Right ventricle myocardium superior (tissue), 1 donor: ENCODE measurements at regions of chr11 and their contacts with region 1.

Region 1: GRCh38 chr11:44538375-44539054 is 26.9 kb upstream of the CD82 start:
- DNase-seq: peak; percentile 86
- ATAC-seq: peak; percentile 97

Region 2: GRCh38 chr11:44094260-44094868 is 444.2 kb before region 1 on chr11:
- intact Hi-C with region 1: loop called (anchors 5 kb)
- DNase-seq: peak; percentile 57
- ATAC-seq: peak; percentile 68

Region 3: DNA sequence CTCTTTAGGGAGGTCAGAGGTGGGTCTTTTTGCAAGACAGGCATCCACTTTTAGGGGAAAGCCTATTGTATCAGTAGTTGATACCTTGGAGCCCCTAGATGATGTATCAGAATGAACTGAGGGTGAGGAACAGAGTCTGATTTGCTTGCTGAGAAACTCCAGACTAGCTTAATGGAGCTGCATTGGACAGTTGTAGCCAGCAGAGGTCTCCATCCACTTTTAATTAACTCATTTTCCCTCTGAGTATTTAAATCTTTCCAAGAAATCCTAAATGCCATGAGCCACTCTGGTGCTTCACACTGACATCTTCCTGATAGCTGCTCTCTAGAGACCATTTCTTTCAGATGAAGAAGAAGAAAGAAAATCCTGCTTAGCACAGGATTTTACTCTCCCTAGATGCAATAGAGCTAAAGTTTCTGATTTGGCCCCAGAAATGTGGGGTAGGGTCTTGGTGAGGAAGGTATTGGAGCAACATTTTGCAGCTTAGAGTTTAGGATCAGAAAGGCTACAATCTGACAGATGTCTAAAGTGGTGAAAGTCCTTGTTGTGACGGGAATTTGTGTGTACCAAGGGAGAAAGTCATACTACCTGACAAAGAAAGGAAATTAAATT is 405.1 kb before region 1 on chr11:
- intact Hi-C with region 1: loop called (anchors 5 kb)
- DNase-seq: no peak
- ATAC-seq: peak; percentile 57

Region 4: GRCh38 chr11:44286268-44286880 is 252.1 kb before region 1 on chr11:
- intact Hi-C with region 1: loop called (anchors 2 kb)
- DNase-seq: no peak
- ATAC-seq: peak; percentile 77